ENCODE measurements at regions of chr5 and their contacts with region 1.

Region 1: GRCh38 chr5:77015938-77016569 is 14.2 kb upstream of the AGGF1 start:
- DNase-seq: no peak
- H3K4me3 ChIP-seq: no peak overlapping the region
- H3K27ac ChIP-seq: no peak overlapping the region
- H3K4me1 ChIP-seq: no peaks in the 10 kb centered on the region
- H3K27me3 ChIP-seq: peaks cover 2% of the 10 kb centered on the region
- CTCF ChIP-seq: peak in 4 of 5 experiments; percentile 14 to 24 (median 20)
- EP300 ChIP-seq: no peak
- POLR2A ChIP-seq: no peak

Region 2: DNA sequence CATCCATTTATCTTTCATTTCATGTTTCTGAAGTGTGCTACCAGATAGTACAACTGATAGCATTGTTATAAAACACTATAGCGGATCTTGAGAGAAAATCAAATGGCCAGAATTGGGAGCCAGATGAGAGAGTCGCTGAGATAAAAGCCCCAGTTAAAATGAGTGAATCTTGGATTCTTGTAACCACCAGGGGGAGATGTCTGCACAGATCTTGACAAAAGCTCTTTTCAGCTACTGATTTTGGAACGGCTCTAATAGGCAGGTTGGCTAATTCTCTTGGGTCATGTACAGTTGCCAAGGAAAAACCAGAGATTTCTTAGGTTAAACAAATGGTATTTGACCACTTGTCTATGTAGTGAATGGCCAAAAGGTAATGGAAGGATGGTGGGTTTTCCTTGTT is 414.6 kb before region 1 on chr5:
- in situ Hi-C with region 1: loop called in 1 of 4 experiments (anchors 25 kb)
- intact Hi-C with region 1: no loop called
- DNase-seq: no peak
- H3K4me3 ChIP-seq: no peak overlapping the region
- H3K27ac ChIP-seq: no peak overlapping the region
- H3K4me1 ChIP-seq: peaks cover 0 to 7% (median 0%) of the 10 kb centered on the region in 4 donors
- H3K27me3 ChIP-seq: no peaks in the 10 kb centered on the region
- CTCF ChIP-seq: peak; percentile 57 to 75 (median 72)
- EP300 ChIP-seq: no peak
- POLR2A ChIP-seq: no peak

Region 3: GRCh38 chr5:76867827-76868693 is 148.0 kb before region 1 on chr5:
- in situ Hi-C with region 1: loop called in 2 of 4 experiments (anchors 10 kb)
- intact Hi-C with region 1: no loop called
- DNase-seq: peak; percentile 70
- H3K4me3 ChIP-seq: no peak overlapping the region
- H3K27ac ChIP-seq: no peak overlapping the region
- H3K4me1 ChIP-seq: peaks cover 0 to 7% (median 0%) of the 10 kb centered on the region in 4 donors
- H3K27me3 ChIP-seq: no peaks in the 10 kb centered on the region
- CTCF ChIP-seq: peak; percentile 60 to 78 (median 73)
- EP300 ChIP-seq: no peak
- POLR2A ChIP-seq: no peak

Region 4: DNA sequence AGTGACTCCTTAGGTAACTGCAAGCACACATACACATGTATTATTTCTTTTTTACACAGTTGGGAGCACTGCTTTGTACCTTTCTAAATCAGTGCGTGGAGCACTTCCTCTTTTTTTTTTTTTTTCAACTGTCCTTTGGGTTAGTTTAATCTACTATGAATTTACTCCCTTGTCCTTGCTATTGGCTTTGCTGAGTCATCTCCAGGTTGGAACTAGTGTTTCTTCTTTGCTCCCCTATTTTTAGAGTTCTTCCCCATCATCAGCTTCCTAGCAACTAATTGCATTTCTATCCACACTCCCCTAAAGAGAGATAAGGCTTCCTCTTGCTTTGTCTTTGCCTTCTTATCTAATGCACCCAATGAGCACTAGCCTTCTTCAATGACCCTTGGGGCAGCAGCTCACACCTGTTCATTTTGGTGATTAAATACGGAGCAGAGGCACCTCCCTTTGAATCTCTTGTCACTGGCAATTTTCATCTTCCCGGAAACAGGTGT is 141.9 kb before region 1 on chr5:
- in situ Hi-C with region 1: loop called in 2 of 4 experiments (anchors 10 kb)
- intact Hi-C with region 1: no loop called
- DNase-seq: no peak
- H3K4me3 ChIP-seq: no peak overlapping the region
- H3K27ac ChIP-seq: no peak overlapping the region
- H3K4me1 ChIP-seq: peaks cover 0 to 3% (median 0%) of the 10 kb centered on the region in 4 donors
- H3K27me3 ChIP-seq: no peaks in the 10 kb centered on the region
- CTCF ChIP-seq: no peak
- EP300 ChIP-seq: no peak
- POLR2A ChIP-seq: no peak

Region 5: GRCh38 chr5:76942581-76942980 is 73.5 kb before region 1 on chr5:
- in situ Hi-C with region 1: no loop called
- intact Hi-C with region 1: no loop called
- DNase-seq: no peak
- H3K4me3 ChIP-seq: no peak overlapping the region
- H3K27ac ChIP-seq: no peak overlapping the region
- H3K4me1 ChIP-seq: no peaks in the 10 kb centered on the region
- H3K27me3 ChIP-seq: no peaks in the 10 kb centered on the region
- CTCF ChIP-seq: no peak
- EP300 ChIP-seq: no peak
- POLR2A ChIP-seq: no peak

Region 6: GRCh38 chr5:77030097-77031071 is 14.3 kb after region 1 on chr5 and contains the start of gene AGGF1:
- in situ Hi-C with region 1: no loop called
- intact Hi-C with region 1: no loop called
- DNase-seq: peak; percentile 95
- H3K4me3 ChIP-seq: peak within 1 kb of the TSS; percentile 89 to 98 (median 92)
- H3K27ac ChIP-seq: peak within 1 kb of the TSS; percentile 93 to 96 (median 96)
- H3K4me1 ChIP-seq: peaks cover 6 to 19% (median 11%) of the 10 kb centered on the region in 4 donors
- H3K27me3 ChIP-seq: no peaks in the 10 kb centered on the region
- CTCF ChIP-seq: no peak
- EP300 ChIP-seq: no peak
- POLR2A ChIP-seq: peak; percentile 85
- total RNA-seq, gene AGGF1: 30.6 to 69.6 (median 50.1) TPM

Region 7: GRCh38 chr5:77867194-77867691 is 851.2 kb after region 1 on chr5:
- in situ Hi-C with region 1: no loop called
- intact Hi-C with region 1: no loop called
- DNase-seq: no peak
- H3K4me3 ChIP-seq: no peak overlapping the region
- H3K27ac ChIP-seq: no peak overlapping the region
- H3K4me1 ChIP-seq: no peaks in the 10 kb centered on the region
- H3K27me3 ChIP-seq: no peaks in the 10 kb centered on the region
- CTCF ChIP-seq: peak in 2 of 5 experiments; percentile 11
- EP300 ChIP-seq: no peak
- POLR2A ChIP-seq: no peak